ENCODE measurements at regions of chr11 and their contacts with region 1.

Region 1: DNA sequence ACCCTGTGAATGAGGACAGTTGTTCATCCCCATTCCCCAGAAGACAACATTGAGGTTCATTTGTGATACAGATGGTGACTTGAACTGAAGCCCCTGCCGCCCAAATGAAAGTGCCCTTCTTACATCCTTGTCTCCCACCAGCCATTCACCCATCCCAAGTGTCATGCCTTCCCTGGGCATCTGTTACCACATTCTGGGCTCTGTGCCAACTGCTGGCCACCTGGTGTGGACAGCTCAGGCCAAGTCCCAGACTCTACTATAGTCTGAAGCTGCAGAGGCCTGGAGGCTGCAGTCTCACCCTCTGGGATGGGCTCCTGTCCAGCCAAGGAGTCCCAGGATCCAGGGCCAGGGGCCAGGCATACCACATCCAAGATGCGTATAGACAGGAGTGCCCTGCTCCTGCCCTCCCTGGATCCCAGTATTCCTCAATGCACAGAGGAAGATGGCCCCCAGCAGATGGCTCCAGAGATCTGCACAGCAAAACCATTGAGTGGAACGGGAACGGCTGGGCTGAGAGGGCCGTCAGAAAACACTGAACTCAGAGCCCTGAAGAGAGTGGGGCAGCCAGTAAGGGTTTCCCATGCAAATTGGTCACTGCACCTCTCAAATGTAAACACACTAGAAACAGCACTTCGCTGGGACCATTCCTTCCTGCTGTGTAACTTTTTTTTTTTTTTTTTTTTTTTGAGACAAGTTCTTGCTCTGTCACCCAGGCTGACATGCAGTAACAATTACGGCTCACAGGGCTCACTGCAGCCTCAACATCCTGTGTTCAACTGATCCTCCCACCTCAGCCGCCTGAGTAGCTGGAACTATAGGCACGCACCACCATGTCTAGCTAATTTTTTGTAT is 22.8 kb downstream of the ARRB1 start:
- DNase-seq: peak; percentile 66
- H3K4me3 ChIP-seq: no peak overlapping the region
- H3K27ac ChIP-seq: no peak overlapping the region
- H3K4me1 ChIP-seq: peaks cover 25% of the 10 kb centered on the region
- H3K27me3 ChIP-seq: no peaks in the 10 kb centered on the region
- CTCF ChIP-seq: peak; percentile 51 to 82

Region 2: GRCh38 chr11:75280227-75280701 is 48.4 kb before region 1 on chr11:
- CTCF ChIA-PET with region 1: no interaction called
- dilution Hi-C with region 1: no loop called
- in situ Hi-C with region 1: no loop called
- intact Hi-C with region 1: loop called (anchors 1 kb)
- DNase-seq: peak; percentile 51
- H3K4me3 ChIP-seq: no peak overlapping the region
- H3K27ac ChIP-seq: no peak overlapping the region
- H3K4me1 ChIP-seq: no peaks in the 10 kb centered on the region
- H3K27me3 ChIP-seq: no peaks in the 10 kb centered on the region
- CTCF ChIP-seq: peak; percentile 95 to 98

Region 3: GRCh38 chr11:75308118-75308517 is 20.5 kb before region 1 on chr11:
- CTCF ChIA-PET with region 1: no interaction called
- dilution Hi-C with region 1: no loop called
- in situ Hi-C with region 1: no loop called
- intact Hi-C with region 1: loop called (anchors 2 kb)
- DNase-seq: no peak
- H3K4me3 ChIP-seq: no peak overlapping the region
- H3K27ac ChIP-seq: no peak overlapping the region
- H3K4me1 ChIP-seq: no peaks in the 10 kb centered on the region
- H3K27me3 ChIP-seq: no peaks in the 10 kb centered on the region
- CTCF ChIP-seq: no peak

Region 4: DNA sequence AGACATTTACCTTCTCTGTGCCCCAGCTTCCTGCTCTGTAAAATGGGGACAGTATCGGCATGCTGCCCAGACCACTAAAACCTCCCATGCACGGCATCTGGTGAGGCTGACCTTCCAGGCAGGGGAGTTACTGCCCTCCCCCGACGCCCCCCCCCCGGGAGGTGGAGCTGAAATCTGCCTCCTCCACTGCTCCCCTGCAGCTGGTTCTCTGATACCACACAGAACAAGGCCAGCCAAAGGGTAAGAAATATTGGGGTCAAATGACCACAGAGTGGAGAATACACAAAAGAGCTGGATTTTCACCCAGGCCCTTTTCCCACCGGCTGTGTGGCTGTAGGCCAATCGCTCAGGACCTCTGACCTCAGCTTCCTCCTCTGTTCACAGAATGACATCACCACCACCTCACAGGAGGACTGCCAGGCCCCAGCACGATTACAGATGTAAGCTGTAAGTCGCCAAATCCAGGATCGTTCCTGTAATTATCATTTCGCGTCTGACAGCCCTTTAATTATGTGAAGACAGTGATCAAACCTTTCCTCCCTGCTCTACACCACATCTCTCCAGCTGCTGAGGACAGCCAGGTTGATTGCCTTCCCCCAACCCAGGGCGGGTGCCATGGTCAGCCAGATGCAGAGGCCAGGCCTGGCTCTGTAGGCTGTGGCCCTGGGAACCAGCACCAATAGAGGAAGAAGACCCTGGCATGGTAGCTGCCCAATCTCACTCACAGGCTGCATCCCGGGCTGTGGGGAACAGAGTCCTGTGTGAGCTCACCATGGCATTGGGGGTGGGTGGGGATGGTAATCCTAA is 140.1 kb after region 1 on chr11:
- CTCF ChIA-PET with region 1: no interaction called
- dilution Hi-C with region 1: no loop called
- in situ Hi-C with region 1: no loop called
- intact Hi-C with region 1: no loop called
- DNase-seq: no peak
- H3K4me3 ChIP-seq: no peak overlapping the region
- H3K27ac ChIP-seq: no peak overlapping the region
- H3K4me1 ChIP-seq: peaks cover 12% of the 10 kb centered on the region
- H3K27me3 ChIP-seq: no peaks in the 10 kb centered on the region
- CTCF ChIP-seq: no peak

Measured in mammary epithelial cell (primary cell).